B cell (primary cell): ENCODE measurements at regions of chr20 and their contacts with region 1.

Region 1: GRCh38 chr20:5191829-5192569 is 65.2 kb downstream of the CDS2 start:
- DNase-seq: peak; percentile 76
- ATAC-seq: peak; percentile 84
- H3K4me3 ChIP-seq: no peak overlapping the region
- H3K4me3 Mint-ChIP-seq: no peak overlapping the region
- H3K27ac ChIP-seq: peak overlapping the region in 1 of 2 donors; percentile 38
- H3K27ac Mint-ChIP-seq: peak overlapping the region; percentile 56
- H3K4me1 ChIP-seq: peaks cover 0 to 7% of the 10 kb centered on the region in 2 donors
- H3K4me1 Mint-ChIP-seq: peaks cover 9% of the 10 kb centered on the region
- H3K27me3 ChIP-seq: no peaks in the 10 kb centered on the region
- H3K27me3 Mint-ChIP-seq: no peaks in the 10 kb centered on the region
- CTCF ChIP-seq: peak; percentile 77

Region 2: DNA sequence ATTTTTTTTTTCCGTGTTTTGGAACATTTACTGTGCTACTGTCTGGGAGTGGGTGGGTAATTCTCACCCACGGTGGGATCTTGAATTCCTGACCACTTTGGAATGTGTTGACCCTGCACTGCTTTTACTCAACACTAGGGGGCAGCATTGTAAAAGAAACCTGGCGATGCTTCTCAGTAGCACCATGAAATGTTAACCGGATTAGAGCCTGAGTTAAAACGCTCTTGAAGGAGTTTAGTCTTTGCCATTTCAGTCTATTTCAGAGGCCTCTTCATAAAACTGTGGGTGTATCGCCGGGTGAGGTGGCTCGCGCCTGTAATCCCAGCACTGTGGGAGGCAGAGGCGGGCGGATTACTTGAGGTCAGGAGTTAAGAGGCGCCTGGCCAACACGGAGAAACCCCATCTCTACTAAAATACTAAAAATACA is 584.7 kb before region 1 on chr20:
- CTCF ChIA-PET with region 1: interaction called, 3 read pairs
- POLR2A ChIA-PET with region 1: no interaction called
- intact Hi-C with region 1: loop called (anchors 1 kb)
- DNase-seq: peak; percentile 79
- ATAC-seq: peak; percentile 94
- H3K4me3 ChIP-seq: no peak overlapping the region
- H3K4me3 Mint-ChIP-seq: no peak overlapping the region
- H3K27ac ChIP-seq: no peak overlapping the region
- H3K27ac Mint-ChIP-seq: peak overlapping the region; percentile 32
- H3K4me1 ChIP-seq: peaks cover 5 to 7% of the 10 kb centered on the region in 2 donors
- H3K4me1 Mint-ChIP-seq: peaks cover 12% of the 10 kb centered on the region
- H3K27me3 ChIP-seq: peaks cover 0 to 12% (median 0%) of the 10 kb centered on the region in 4 experiments
- H3K27me3 Mint-ChIP-seq: peaks cover 15% of the 10 kb centered on the region
- CTCF ChIP-seq: peak; percentile 99

Region 3: DNA sequence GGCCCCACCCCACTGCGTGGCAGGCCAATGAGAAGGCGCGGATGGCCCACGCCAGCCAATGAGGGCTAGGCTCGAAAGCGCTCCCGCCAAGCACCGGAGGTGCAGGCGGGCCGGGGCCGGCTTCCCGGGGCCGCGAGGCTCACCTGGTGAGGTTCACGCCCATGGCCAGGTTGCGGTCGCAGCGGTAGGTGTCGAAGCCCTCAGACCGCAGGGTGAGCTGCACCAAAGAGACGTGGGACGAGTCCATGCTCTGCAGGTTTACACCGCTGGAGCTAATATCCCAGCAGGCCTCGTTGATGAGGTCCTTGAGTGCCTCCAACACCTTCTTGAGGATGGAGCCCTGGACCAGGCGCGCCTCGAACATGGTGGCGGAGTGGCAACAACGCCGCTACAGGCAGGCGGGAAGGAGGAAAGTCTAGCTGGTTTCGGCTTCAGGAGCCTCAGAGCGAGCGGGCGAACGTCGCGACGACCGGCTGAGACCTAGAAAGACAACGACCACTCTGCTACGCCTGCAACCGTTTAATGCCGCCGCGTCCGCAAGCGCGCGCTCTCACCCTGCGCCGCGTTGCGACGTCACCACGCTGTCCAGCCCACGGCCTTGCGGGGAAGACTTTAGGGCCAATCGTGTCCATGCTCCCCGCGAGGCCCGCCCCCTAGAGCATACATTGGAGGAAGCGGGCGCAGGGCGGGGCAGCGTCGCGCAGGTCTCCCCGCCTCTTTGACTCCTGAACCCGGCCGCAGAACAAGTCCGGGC is 72.4 kb before region 1 on chr20 and contains the start of gene PCNA:
- CTCF ChIA-PET with region 1: interaction called, 149 read pairs
- POLR2A ChIA-PET with region 1: no interaction called
- intact Hi-C with region 1: loop called (anchors 1 kb)
- DNase-seq: peak; percentile 96
- ATAC-seq: peak; percentile 94
- H3K4me3 ChIP-seq: peak within 1 kb of the TSS; percentile 77 to 91 (median 90)
- H3K4me3 Mint-ChIP-seq: peak within 1 kb of the TSS; percentile 98
- H3K27ac ChIP-seq: peak within 1 kb of the TSS; percentile 68 to 72
- H3K27ac Mint-ChIP-seq: peak within 1 kb of the TSS; percentile 98
- H3K4me1 ChIP-seq: peaks cover 12 to 14% of the 10 kb centered on the region in 2 donors
- H3K4me1 Mint-ChIP-seq: peaks cover 23% of the 10 kb centered on the region
- H3K27me3 ChIP-seq: no peaks in the 10 kb centered on the region
- H3K27me3 Mint-ChIP-seq: no peaks in the 10 kb centered on the region
- CTCF ChIP-seq: no peak
- total RNA-seq, gene PCNA: 31.7 and 35.5 TPM in 2 replicates